ENCODE measurements at regions of chr3 and their contacts with region 1.

Region 1: DNA sequence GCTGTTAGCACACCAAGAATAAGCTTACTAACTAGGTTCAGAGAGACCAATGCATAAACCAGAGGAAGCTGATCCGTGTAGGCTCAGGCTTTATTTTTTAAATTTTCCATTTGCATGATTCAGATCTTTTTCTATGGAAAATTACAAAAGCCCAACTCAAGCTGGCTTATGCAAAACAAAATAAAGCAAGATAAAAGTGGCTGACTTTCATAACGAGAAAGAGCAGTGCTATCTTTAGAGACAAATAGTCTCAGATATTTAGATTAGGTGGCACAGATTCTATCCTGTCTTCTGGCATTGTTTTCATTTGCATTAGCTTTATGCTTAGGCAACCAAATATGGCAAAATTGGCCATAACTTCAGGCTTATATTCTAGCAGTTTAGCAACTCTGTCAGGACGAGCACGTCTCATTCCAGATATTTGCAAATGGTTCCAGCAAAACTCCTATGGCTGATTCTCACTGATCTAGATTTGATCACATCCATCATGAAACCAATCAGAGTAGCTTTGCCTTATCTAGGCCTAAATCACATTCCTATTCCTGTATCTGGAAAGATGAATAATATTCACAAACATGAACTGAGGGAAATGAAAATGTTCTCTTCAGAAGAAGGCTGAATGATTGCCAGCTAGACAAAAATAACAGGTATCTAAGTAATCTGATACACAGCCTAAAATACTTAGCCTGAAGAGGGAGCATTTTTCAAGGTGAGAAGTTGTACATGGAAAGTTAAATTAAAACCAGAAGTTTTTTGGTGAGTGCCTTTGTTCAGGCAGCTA is 216.4 kb upstream of the DPPA4 start:
- DNase-seq: peak; percentile 72
- H3K4me3 ChIP-seq: no peak overlapping the region
- H3K27ac ChIP-seq: no peak overlapping the region
- H3K4me1 ChIP-seq: peaks cover 3% of the 10 kb centered on the region
- H3K27me3 ChIP-seq: no peaks in the 10 kb centered on the region
- CTCF ChIP-seq: peak in 1 of 2 donors; percentile 32

Region 2: GRCh38 chr3:109442531-109442930 is 111.2 kb before region 1 on chr3:
- CTCF ChIA-PET with region 1: no interaction called
- dilution Hi-C with region 1: no loop called
- in situ Hi-C with region 1: no loop called
- intact Hi-C with region 1: no loop called
- DNase-seq: no peak
- H3K4me3 ChIP-seq: no peak overlapping the region
- H3K27ac ChIP-seq: no peak overlapping the region
- H3K4me1 ChIP-seq: no peaks in the 10 kb centered on the region
- H3K27me3 ChIP-seq: no peaks in the 10 kb centered on the region
- CTCF ChIP-seq: no peak

Region 3: DNA sequence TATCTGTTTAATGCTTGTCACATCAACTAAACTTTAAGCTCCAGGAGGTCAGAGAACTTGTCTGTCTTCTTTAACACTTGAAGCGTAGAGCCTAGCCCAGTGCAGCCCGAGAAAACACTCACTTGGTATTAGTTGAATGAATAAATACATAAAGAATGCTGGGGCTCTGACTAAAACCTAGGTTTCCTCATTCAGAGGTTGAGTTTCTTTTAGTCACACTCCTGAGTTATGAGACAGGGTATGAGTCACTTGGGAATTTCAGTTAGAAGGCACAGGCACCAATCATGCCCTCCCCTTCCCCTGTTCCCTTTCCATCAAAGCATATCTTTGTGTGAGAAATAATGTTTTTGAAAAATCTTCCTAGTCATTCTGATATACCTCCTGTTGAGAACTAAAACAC is 373.4 kb after region 1 on chr3:
- CTCF ChIA-PET with region 1: no interaction called
- dilution Hi-C with region 1: no loop called
- in situ Hi-C with region 1: no loop called
- intact Hi-C with region 1: loop called (anchors 5 kb)
- DNase-seq: peak; percentile 99
- H3K4me3 ChIP-seq: no peak overlapping the region
- H3K27ac ChIP-seq: peak overlapping the region; percentile 98
- H3K4me1 ChIP-seq: peaks cover 28% of the 10 kb centered on the region
- H3K27me3 ChIP-seq: no peaks in the 10 kb centered on the region
- CTCF ChIP-seq: no peak

Region 4: DNA sequence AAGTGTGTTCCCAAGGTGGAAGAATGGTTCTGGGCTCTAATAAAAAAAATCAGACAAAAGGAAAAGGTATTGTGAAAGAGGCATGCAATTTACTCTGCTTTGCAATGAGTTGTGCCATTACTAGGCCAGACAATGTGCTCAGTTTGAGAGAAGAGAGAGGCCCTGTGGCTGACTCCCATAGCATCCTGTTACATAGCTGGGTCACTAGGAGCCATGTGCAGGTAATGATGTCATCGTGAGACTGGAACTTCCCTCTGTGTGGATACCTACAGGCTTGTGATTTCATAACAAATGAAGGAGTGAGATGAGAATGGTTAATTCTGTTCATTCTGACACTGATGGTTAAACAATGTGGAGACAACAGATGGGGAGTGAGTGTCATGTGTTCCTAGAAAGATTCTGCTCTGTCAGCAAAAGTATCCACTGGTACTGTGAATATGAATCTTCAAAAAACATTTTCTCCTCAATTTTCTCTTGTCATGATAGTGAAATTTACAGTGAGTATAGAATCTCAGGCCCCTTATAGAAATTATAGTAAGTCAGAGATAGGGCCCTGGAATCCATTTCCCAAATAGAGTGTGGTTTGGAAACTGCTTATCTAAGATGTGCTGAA is 432.3 kb after region 1 on chr3:
- CTCF ChIA-PET with region 1: no interaction called
- dilution Hi-C with region 1: no loop called
- in situ Hi-C with region 1: no loop called
- intact Hi-C with region 1: no loop called
- DNase-seq: peak; percentile 66
- H3K4me3 ChIP-seq: no peak overlapping the region
- H3K27ac ChIP-seq: no peak overlapping the region
- H3K4me1 ChIP-seq: no peaks in the 10 kb centered on the region
- H3K27me3 ChIP-seq: no peaks in the 10 kb centered on the region
- CTCF ChIP-seq: no peak

Region 5: GRCh38 chr3:110198717-110199587 is 645.2 kb after region 1 on chr3:
- CTCF ChIA-PET with region 1: no interaction called
- dilution Hi-C with region 1: no loop called
- in situ Hi-C with region 1: no loop called
- intact Hi-C with region 1: no loop called
- DNase-seq: no peak
- H3K4me3 ChIP-seq: no peak overlapping the region
- H3K27ac ChIP-seq: no peak overlapping the region
- H3K4me1 ChIP-seq: no peaks in the 10 kb centered on the region
- H3K27me3 ChIP-seq: no peaks in the 10 kb centered on the region
- CTCF ChIP-seq: no peak

Measured in mammary epithelial cell (primary cell).